Panc1 (cell line): ENCODE measurements at regions of chr3 and their contacts with region 1.

Region 1: DNA sequence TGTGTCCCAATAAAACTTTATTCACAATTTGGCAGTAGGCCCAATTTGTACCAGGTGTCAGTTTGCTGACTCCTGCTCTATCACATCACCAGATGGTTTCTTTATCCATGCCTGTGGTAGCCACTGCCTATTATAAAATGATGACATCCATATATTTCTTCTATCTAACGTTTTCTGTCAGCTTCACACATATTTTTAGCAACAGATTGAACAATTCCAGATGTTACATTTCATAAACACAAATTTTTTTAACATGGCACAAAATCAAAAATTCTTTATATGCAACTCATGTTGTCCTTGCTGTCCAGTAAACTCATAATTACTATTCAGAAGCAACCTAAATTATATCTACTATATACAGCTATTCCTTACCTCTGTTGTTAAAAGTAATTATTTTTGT is 1371.6 kb downstream of the NSUN3 start:
- DNase-seq: no peak
- ATAC-seq: no peak
- H3K4me3 ChIP-seq: no peak overlapping the region
- H3K27ac ChIP-seq: no peak overlapping the region
- H3K4me1 ChIP-seq: no peaks in the 10 kb centered on the region
- H3K27me3 ChIP-seq: no peaks in the 10 kb centered on the region
- CTCF ChIP-seq: no peak

Region 2: DNA sequence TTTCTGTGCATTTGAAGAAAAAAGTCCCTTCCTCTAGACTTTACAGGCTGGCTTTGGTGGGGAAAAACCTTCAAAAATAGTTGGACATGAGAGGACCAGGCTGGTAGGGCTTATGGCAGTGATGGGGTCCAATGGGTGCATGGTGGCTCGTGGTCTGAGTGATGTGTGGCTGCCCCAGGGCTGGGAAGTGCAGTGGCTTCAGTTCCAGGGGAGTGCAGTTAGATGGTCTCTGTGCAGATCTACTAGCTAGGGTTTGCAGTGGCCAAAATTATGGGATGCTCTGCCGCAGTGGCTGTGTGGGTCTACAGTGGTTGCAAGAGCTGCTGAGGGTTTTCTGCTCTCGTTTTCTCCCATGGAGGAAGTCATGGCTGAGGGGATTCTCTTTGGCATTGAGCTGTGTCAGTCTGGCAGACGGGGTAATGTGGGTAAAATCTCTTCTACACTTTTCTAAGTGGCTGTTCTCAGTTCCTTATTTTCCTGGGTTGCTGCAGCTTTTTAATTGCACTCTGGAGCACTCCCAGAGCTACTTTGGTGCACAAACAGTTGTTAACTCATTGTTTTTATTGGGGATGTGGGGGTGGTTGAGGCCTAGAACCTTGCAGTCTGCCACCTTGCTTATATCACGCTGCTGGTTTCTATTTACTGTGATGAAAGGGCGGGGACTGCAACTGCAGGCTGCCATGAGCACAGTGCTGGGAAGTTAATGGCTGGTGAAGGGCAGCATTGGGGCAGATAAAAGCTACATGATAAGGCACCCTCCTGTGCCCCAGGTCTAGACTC is 47.1 kb before region 1 on chr3:
- CTCF ChIA-PET with region 1: no interaction called
- POLR2A ChIA-PET with region 1: no interaction called
- in situ Hi-C with region 1: no loop called
- intact Hi-C with region 1: no loop called
- DNase-seq: no peak
- ATAC-seq: no peak
- H3K4me3 ChIP-seq: no peak overlapping the region
- H3K27ac ChIP-seq: no peak overlapping the region
- H3K4me1 ChIP-seq: no peaks in the 10 kb centered on the region
- H3K27me3 ChIP-seq: no peaks in the 10 kb centered on the region
- CTCF ChIP-seq: no peak

Region 3: GRCh38 chr3:95705786-95706418 is 271.4 kb after region 1 on chr3:
- CTCF ChIA-PET with region 1: no interaction called
- POLR2A ChIA-PET with region 1: no interaction called
- in situ Hi-C with region 1: no loop called
- intact Hi-C with region 1: loop called (anchors 5 kb)
- DNase-seq: no peak
- ATAC-seq: no peak
- H3K4me3 ChIP-seq: peak overlapping the region; percentile 34 to 52
- H3K27ac ChIP-seq: no peak overlapping the region
- H3K4me1 ChIP-seq: no peaks in the 10 kb centered on the region
- H3K27me3 ChIP-seq: no peaks in the 10 kb centered on the region
- CTCF ChIP-seq: no peak